ENCODE measurements at regions of chr11 and their contacts with region 1.

Region 1: DNA sequence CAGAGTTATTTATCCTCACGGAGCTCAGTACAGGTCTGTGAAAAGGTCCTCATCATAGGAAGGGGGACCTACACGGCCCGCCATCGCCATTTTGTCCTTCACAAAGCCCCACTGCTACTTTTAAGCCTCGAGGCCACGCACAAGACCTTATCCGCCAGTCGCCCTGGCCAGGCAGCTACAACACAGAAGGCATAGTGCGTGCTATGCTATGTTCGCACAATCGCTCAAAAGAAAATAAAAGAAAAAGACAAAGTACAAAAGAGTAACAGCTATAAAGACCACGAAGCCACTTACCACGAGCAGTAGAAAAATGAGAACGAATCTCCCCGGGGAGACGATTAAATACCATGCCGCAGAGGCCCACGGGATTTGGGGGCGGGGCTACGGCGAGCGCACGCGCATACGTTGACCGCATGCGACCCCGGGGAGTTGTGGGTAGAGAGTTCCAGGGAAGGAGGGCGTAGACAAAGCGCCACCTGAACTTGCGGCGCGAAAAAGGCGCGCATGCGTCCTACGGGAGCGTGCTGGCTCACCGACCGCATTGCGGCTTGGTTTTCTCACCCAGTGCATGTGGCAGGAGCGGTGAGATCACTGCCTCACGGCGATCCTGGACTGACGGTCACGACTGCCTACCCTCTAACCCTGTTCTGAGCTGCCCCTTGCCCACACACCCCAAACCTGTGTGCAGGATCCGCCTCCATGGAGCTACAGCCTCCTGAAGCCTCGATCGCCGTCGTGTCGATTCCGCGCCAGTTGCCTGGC is 16.4 kb upstream of the WDR74 start:
- DNase-seq: peak; percentile 100
- ATAC-seq: peak; percentile 83
- H3K4me3 ChIP-seq: peak overlapping the region; percentile 93
- H3K27ac ChIP-seq: peak overlapping the region; percentile 78
- H3K4me1 ChIP-seq: peaks cover 31% of the 10 kb centered on the region
- H3K27me3 ChIP-seq: no peaks in the 10 kb centered on the region
- CTCF ChIP-seq: no peak

Region 2: DNA sequence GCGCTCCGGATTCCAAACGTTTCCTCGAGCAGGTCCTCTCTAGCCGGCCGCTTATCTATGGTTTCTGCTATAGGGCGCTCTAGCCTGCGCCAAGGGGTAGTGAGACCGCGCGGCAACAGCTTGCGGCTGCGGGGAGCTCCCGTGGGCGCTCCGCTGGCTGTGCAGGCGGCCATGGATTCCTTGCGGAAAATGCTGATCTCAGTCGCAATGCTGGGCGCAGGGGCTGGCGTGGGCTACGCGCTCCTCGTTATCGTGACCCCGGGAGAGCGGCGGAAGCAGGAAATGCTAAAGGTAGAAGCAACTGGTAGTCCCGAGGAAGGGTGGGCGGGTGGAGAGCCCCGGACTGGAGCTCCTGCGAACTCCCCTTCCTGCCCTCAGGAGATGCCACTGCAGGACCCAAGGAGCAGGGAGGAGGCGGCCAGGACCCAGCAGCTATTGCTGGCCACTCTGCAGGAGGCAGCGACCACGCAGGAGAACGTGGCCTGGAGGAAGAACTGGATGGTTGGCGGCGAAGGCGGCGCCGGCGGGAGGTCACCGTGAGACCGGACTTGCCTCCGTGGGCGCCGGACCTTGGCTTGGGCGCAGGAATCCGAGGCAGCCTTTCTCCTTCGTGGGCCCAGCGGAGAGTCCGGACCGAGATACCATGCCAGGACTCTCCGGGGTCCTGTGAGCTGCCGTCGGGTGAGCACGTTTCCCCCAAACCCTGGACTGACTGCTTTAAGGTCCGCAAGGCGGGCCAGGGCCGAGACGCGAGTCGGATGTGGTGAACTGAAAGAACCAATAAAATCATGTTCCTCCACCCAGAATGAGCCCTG is 184.0 kb before region 1 on chr11 and contains the starts of genes LBHD1 and UQCC3:
- CTCF ChIA-PET with region 1: interaction called, 10 read pairs
- POLR2A ChIA-PET with region 1: no interaction called
- intact Hi-C with region 1: no loop called
- DNase-seq: peak; percentile 90
- ATAC-seq: peak; percentile 72
- H3K4me3 ChIP-seq: peak within 1 kb of the TSS; percentile 92
- H3K27ac ChIP-seq: peak within 1 kb of the TSS; percentile 80
- H3K4me1 ChIP-seq: peaks cover 40% of the 10 kb centered on the region
- H3K27me3 ChIP-seq: no peaks in the 10 kb centered on the region
- CTCF ChIP-seq: no peak
- total RNA-seq, gene LBHD1: 4.7 and 9.7 TPM in 2 replicates
- total RNA-seq, gene UQCC3: 83.6 and 95.6 TPM in 2 replicates

Region 3: GRCh38 chr11:62771144-62772021 is 84.4 kb before region 1 on chr11 and contains the start of gene TAF6L:
- CTCF ChIA-PET with region 1: no interaction called
- POLR2A ChIA-PET with region 1: interaction called, 21 read pairs
- intact Hi-C with region 1: no loop called
- DNase-seq: peak; percentile 99
- ATAC-seq: peak; percentile 92
- H3K4me3 ChIP-seq: peak within 1 kb of the TSS; percentile 74
- H3K27ac ChIP-seq: peak within 1 kb of the TSS; percentile 76
- H3K4me1 ChIP-seq: peaks cover 13% of the 10 kb centered on the region
- H3K27me3 ChIP-seq: no peaks in the 10 kb centered on the region
- CTCF ChIP-seq: no peak
- total RNA-seq, gene TAF6L: 40.2 and 43.9 TPM in 2 replicates

Region 4: DNA sequence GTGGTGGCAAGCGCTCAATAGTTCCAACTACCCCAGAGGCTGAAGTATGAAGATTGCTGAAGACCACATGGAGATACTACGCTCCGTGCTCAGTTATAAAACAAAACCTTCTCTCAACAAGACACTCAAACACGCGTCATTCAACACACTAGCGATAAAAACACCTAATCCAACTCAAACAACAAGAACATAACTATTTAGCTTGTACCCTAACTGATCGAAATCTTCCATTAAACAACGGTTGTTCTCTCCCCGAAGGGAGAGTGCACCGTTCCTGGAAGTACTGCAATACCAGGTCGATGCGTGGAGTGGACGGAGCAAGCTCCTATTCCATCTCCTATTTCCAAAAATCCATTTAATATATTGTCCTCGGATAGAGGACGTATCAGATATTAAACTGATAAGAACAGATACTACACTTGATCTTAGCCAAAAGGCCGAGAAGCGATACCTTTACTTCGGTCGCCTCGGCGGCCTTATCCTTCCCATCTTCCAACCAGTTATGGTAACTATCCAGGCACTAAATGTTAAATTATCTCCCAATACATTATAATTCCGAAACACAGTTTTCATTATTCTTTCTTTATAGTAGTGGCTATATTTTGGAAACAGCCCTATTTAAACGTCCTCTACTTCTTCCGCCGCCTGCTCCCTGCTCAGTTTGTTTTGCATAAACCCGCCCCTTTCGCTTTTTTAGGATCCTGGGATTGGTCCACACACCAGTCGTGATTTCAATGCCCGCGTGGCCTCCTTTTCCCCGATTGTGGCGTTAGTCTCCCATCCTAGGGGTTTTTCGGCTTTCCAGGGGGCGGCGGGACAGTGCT is 14.2 kb before region 1 on chr11:
- CTCF ChIA-PET with region 1: no interaction called
- POLR2A ChIA-PET with region 1: interaction called, 25 read pairs
- intact Hi-C with region 1: loop called (anchors 1 kb)
- DNase-seq: peak; percentile 100
- ATAC-seq: peak; percentile 75
- H3K4me3 ChIP-seq: peak overlapping the region; percentile 64
- H3K27ac ChIP-seq: peak overlapping the region; percentile 90
- H3K4me1 ChIP-seq: peaks cover 6% of the 10 kb centered on the region
- H3K27me3 ChIP-seq: no peaks in the 10 kb centered on the region
- CTCF ChIP-seq: no peak

Region 5: GRCh38 chr11:62880803-62881578 is 25.2 kb after region 1 on chr11 and contains the start of gene SLC3A2:
- CTCF ChIA-PET with region 1: interaction called, 8 read pairs
- POLR2A ChIA-PET with region 1: interaction called, 8 read pairs
- intact Hi-C with region 1: loop called (anchors 2 kb)
- DNase-seq: peak; percentile 93
- ATAC-seq: peak; percentile 82
- H3K4me3 ChIP-seq: peak within 1 kb of the TSS; percentile 85
- H3K27ac ChIP-seq: peak within 1 kb of the TSS; percentile 93
- H3K4me1 ChIP-seq: peaks cover 38% of the 10 kb centered on the region
- H3K27me3 ChIP-seq: no peaks in the 10 kb centered on the region
- CTCF ChIP-seq: peak; percentile 81
- total RNA-seq, gene SLC3A2: 243 and 304 TPM in 2 replicates